ENCODE measurements at regions of chr9 and their contacts with region 1.

Region 1: DNA sequence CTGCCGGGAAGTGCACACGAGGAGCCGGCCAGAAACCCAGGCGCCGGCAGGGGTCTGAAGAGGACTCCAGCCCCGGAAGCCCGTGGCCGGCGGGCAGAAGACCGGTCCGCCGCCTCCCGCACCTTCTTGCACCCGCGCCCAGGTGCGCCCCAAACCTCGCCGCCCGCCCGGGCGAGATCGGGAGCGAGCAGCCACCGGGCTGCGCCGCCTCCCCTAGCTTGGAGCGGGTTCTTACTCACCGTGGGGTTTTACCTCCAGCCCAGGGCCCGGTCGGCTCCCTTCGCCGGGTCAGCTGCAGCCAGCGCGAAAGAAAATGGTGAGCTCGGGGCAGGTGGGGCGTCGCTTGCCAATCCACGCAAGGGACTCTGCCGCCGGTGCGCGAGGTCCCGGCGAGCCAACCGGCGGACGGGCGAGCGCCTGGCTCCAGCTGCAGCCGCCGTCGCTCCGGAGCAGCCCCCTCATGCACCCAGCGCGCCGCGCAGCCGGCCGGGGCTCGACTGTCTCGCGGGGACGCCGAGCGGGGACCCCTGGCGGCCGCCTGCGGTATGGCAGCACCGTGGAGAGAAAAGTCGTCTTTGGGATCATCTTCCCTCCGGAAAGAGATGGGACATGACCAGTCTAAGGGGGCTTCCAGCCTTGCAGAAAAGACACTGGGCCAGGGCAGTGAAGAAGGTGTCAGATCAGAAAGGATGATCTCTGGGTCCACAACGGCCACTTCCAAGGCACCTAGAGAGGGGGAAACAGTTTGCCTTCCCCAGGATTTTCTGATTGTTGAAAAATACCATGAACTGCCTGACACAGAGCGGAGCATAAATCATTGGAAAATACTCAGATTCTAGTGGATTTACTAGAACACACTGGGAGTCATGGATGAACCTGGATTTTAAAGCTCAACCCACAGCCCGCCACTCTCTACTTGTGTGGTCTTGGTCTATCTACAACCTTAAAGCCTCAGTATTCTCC is at the start of gene MOB3B:
- ATAC-seq: peak; percentile 45 to 87 (median 82)
- H3K4me3 ChIP-seq: peak within 1 kb of the TSS; percentile 39 to 81 (median 55)
- H3K27ac ChIP-seq: peak within 1 kb of the TSS in 1 of 2 donors; percentile 39
- H3K4me1 ChIP-seq: peaks cover 24 to 48% of the 10 kb centered on the region in 2 donors
- total RNA-seq, gene MOB3B: 3.7 to 13.4 (median 5.2) TPM

Region 2: GRCh38 chr9:27033823-27034403 is 495.7 kb before region 1 on chr9:
- in situ Hi-C with region 1: loop called in 2 of 9 experiments (anchors 25 kb)
- ATAC-seq: peak in 4 of 8 experiments; percentile 30 to 72 (median 66)
- H3K4me3 ChIP-seq: no peak overlapping the region
- H3K27ac ChIP-seq: no peak overlapping the region
- H3K4me1 ChIP-seq: no peaks in the 10 kb centered on the region

Region 3: GRCh38 chr9:27333241-27334052 is 196.2 kb before region 1 on chr9:
- in situ Hi-C with region 1: loop called in 5 of 9 experiments (anchors 10 to 25 kb)
- ATAC-seq: peak; percentile 22 to 80 (median 75)
- H3K4me3 ChIP-seq: no peak overlapping the region
- H3K27ac ChIP-seq: no peak overlapping the region
- H3K4me1 ChIP-seq: peaks cover 2 to 5% of the 10 kb centered on the region in 2 donors

Region 4: GRCh38 chr9:27407986-27408385 is 121.6 kb before region 1 on chr9:
- in situ Hi-C with region 1: loop called in 1 of 9 experiments (anchors 25 kb)
- ATAC-seq: peak in 7 of 8 experiments; percentile 15 to 61 (median 43)
- H3K4me3 ChIP-seq: no peak overlapping the region
- H3K27ac ChIP-seq: no peak overlapping the region
- H3K4me1 ChIP-seq: peaks cover 8 to 9% of the 10 kb centered on the region in 2 donors